Activated CD4-positive, alpha-beta T cell treated with anti-CD3 and anti-CD28 coated beads, Interleukin-2, amount 10 ng/mL, durations not matched to agents 24 days and 14 days (primary cell): ENCODE measurements at regions of chr2 and their contacts with region 1.

Region 1: GRCh38 chr2:55311444-55311870 is 42.4 kb upstream of the MTIF2 start:
- DNase-seq: no peak
- H3K4me3 Mint-ChIP-seq: no peak overlapping the region
- H3K27ac Mint-ChIP-seq: peak overlapping the region; percentile 54
- H3K4me1 Mint-ChIP-seq: peaks cover 14% of the 10 kb centered on the region
- H3K27me3 Mint-ChIP-seq: no peaks in the 10 kb centered on the region

Region 2: GRCh38 chr2:55133467-55134315 is 177.8 kb before region 1 on chr2:
- intact Hi-C with region 1: loop called (anchors 5 kb)
- DNase-seq: peak; percentile 90
- H3K4me3 Mint-ChIP-seq: peak overlapping the region; percentile 79
- H3K27ac Mint-ChIP-seq: peak overlapping the region; percentile 91
- H3K4me1 Mint-ChIP-seq: peaks cover 21% of the 10 kb centered on the region
- H3K27me3 Mint-ChIP-seq: no peaks in the 10 kb centered on the region

Region 3: DNA sequence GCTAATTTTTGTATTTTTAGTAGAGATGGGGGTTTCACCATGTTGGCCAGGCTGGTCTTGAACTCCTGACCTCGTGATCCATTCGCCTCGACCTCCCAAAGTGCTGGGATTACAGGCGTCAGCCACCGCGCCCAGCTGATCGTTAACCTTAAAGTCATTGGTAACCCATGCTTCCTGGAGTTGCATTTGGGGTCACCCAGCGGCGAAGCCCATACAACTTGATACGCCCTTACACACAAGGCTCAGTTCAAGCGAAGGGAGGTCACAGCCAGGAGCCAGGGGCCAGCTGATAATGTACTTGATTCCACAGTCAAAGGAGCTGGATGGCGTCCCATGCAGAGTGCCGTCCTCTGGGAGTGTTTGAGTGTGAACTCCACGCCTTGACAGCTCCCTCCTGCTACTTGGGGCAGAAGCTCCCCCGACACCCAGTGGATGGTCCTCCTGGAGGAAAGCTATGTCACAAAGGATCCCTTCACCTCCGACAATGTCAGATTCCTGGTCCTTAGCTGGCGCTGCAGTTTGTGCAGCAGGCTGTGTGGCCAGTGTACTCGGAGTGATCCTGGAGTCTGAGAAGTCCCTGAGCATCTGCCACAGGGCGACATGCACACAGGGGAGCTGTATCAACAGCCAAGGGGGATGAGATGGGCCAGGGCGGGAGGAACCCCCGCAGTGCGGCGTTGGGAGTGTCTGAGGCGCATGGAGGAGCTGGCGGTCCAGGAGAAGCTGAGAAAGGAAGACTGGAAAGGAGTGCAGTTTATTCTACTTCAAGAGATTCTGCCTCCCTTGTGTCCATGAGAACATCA is 87.3 kb before region 1 on chr2:
- intact Hi-C with region 1: no loop called
- DNase-seq: no peak
- H3K4me3 Mint-ChIP-seq: peak overlapping the region; percentile 75
- H3K27ac Mint-ChIP-seq: peak overlapping the region; percentile 85
- H3K4me1 Mint-ChIP-seq: peaks cover 36% of the 10 kb centered on the region
- H3K27me3 Mint-ChIP-seq: no peaks in the 10 kb centered on the region

Region 4: DNA sequence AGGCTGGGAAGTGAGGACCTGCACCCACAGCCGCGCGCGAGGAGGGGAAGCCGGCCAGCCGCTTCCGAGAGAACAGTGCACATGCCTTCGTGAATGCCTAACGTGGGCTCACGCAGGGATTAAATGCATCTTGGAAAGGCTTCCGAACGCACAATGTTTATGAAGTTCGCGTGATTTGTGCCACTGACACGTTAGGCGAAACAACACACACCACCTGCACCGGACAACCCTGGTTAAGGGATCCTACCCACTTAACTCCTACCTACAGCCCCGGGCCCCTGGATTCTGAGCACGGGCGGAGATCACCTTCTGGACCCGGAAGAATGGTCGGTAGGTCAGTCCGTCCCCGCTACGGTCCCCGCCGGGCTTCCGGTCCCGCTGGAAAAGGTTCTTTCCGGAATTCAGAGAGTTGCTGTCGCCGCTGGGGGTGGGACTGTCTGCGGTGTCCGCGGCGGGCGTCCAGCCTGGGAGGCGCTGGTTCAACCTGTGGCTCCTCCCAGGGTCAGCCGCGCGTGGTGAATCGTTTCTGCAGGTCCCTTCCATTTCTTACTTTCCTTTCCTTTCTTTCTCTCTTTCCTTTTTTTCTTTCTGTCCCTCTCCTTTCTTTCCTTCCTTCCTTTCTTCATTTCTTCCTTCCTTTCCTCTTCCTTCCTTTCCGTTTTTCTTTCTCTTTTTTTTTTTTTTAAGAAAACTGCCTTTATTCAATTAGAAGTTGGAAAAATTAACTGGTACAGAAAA is 42.4 kb before region 1 on chr2 and contains the start of gene MTIF2:
- intact Hi-C with region 1: loop called (anchors 5 kb)
- DNase-seq: peak; percentile 97
- H3K4me3 Mint-ChIP-seq: peak within 1 kb of the TSS; percentile 96
- H3K27ac Mint-ChIP-seq: peak within 1 kb of the TSS; percentile 95
- H3K4me1 Mint-ChIP-seq: peaks cover 7% of the 10 kb centered on the region
- H3K27me3 Mint-ChIP-seq: peaks cover 4% of the 10 kb centered on the region
- total RNA-seq, gene MTIF2: 45.7 and 47.1 TPM in 2 replicates

Region 5: GRCh38 chr2:55296393-55296792 is 15.1 kb before region 1 on chr2:
- intact Hi-C with region 1: loop called (anchors 2 kb)
- DNase-seq: no peak
- H3K4me3 Mint-ChIP-seq: no peak overlapping the region
- H3K27ac Mint-ChIP-seq: no peak overlapping the region
- H3K4me1 Mint-ChIP-seq: peaks cover 9% of the 10 kb centered on the region
- H3K27me3 Mint-ChIP-seq: no peaks in the 10 kb centered on the region

Region 6: DNA sequence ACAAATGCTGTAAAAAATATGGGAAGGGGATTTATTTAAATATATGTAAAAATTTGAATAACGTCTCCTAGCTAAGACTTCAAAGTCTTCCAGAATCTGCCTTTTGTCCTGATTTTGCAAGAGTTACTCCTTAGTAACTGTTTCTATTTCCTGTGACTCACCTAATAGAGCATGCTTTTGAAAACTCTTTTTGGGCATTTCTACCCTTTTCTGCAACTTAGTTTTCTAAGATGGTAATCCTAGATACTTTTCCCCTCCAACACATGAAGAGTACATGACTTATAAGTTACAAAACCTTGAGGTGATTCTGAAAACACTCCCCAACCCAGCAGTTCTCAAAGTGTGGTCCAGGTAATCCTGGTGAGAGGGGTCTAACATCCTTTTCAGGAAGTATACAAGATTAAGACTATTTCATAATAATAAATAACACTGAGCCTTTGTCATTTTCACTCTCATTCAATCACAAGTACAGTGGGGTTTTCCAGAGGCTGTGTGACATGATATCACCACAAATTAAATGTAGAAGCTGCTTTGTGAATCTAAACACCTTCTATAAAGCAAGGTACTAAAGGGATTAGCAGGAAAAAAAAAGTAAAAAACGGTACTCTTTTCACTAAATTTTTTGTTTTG is 274.1 kb after region 1 on chr2:
- intact Hi-C with region 1: loop called (anchors 5 kb)
- DNase-seq: no peak
- H3K4me3 Mint-ChIP-seq: no peak overlapping the region
- H3K27ac Mint-ChIP-seq: peak overlapping the region; percentile 70
- H3K4me1 Mint-ChIP-seq: peaks cover 16% of the 10 kb centered on the region
- H3K27me3 Mint-ChIP-seq: no peaks in the 10 kb centered on the region

Region 7: DNA sequence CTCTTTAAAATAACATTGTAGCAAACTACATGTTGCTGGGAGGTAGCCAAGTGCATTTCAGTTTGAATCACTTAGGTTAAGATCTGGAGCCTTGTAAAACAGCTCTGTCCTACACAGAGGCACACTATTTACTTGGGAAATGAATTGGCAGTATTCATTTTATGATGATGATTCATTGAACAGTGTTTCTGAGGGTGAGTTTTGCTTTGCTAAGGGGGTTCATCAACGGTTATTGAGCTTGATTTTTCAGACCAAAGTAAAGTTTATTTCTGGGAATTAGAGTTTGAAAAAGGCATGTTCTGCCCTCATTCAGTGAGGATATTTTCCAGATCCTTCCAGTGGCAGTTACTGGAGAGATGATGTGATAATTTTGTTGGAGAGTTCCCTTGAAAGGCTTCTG is 928.0 kb after region 1 on chr2:
- intact Hi-C with region 1: no loop called
- DNase-seq: no peak
- H3K4me3 Mint-ChIP-seq: no peak overlapping the region
- H3K27ac Mint-ChIP-seq: no peak overlapping the region
- H3K4me1 Mint-ChIP-seq: no peaks in the 10 kb centered on the region
- H3K27me3 Mint-ChIP-seq: no peaks in the 10 kb centered on the region